CD8-positive, alpha-beta T cell (primary cell): ENCODE measurements at regions of chr12 and their contacts with region 1.

Region 1: DNA sequence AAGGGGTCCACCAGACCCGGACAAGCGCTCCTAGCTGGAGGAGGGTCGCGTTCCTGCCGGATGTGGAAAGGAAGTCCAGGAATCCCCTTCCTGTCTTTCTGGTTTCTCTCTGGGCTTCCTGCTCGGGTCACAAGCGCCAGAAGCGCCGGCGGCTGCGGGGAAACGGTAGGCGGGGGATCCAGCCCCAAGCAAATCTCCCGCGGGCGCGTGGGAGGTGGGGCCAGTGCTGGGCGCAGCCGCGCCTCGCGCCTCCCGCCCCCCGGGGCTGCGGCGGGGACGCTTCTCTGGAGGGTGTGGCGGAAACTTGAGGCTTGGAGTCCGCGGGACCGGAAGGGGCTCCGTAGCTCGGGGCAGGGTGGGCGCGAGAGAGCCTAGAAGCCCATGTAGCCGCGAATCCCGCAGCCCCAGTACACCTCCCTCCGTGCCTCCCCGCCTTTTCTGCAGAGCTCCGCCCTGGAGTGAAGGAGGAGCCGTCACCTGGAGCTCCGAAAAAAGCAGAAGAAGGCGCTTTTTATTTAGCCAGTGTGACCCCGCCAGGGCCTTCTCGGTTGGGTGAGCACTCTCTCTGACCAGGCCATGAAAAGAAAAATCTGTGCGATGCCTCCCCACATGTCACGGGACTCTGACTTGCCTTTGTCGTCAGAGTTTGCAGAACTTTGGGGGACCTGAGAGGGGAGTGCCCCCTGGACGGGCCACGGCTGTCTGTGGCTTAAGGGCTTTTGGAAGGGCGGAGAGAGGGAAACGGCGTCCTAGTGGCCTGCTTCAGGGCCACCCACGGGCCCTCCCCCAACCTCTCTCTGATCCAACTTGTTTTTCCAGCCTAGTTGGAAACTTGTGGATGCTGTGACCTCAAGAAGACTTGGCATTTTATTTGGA is 21.4 kb upstream of the CLEC2D start:
- DNase-seq: peak; percentile 79 to 98 (median 90)
- ATAC-seq: peak; percentile 76
- H3K4me3 ChIP-seq: peak overlapping the region; percentile 81 to 85
- H3K4me3 Mint-ChIP-seq: peak overlapping the region; percentile 98
- H3K27ac ChIP-seq: peak overlapping the region; percentile 83 to 93
- H3K27ac Mint-ChIP-seq: peak overlapping the region; percentile 96
- H3K4me1 ChIP-seq: peaks cover 55% of the 10 kb centered on the region
- H3K4me1 Mint-ChIP-seq: peaks cover 61% of the 10 kb centered on the region
- H3K27me3 ChIP-seq: no peaks in the 10 kb centered on the region
- H3K27me3 Mint-ChIP-seq: no peaks in the 10 kb centered on the region
- CTCF ChIP-seq: no peak

Region 2: DNA sequence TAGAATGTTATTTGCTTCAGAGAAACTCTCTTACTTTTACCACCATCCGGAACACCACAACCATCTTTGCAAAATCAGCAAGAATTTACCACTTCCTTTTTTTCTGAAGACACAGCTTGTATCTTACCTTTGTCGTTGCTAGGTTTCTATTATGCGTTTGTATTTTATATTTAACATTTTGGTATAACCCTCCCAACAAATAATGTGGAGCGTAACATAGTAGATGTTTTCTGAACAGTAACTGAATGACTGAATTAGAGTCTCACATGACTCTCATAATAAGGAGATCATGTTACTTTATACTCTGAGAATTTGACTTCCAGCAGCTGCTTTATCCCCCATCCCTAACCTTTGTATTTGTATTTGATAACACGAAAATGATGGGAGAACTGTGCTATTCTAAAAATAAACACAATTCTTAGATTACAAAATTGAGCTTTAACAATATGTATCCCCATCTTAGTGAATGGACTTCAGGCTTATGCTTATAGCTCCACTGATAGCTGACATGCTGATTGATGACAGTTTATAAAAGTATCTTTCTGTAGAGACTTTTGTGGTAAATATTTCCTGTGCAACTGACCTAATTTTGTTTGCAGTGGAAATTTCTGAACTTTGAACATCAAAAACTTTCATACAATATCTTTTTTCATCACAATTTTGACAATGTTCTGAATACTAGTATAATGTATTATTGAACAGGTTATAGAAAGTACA is 32.5 kb before region 1 on chr12:
- CTCF ChIA-PET with region 1: no interaction called
- POLR2A ChIA-PET with region 1: interaction called, 6 read pairs
- intact Hi-C with region 1: loop called in 1 of 2 experiments (anchors 2 kb)
- DNase-seq: peak in 2 of 9 experiments; percentile 60 to 76
- ATAC-seq: peak; percentile 86
- H3K4me3 ChIP-seq: peak overlapping the region; percentile 19 to 42
- H3K4me3 Mint-ChIP-seq: peak overlapping the region; percentile 74
- H3K27ac ChIP-seq: peak overlapping the region; percentile 75 to 90
- H3K27ac Mint-ChIP-seq: peak overlapping the region; percentile 95
- H3K4me1 ChIP-seq: peaks cover 31% of the 10 kb centered on the region
- H3K4me1 Mint-ChIP-seq: peaks cover 72% of the 10 kb centered on the region
- H3K27me3 ChIP-seq: no peaks in the 10 kb centered on the region
- H3K27me3 Mint-ChIP-seq: no peaks in the 10 kb centered on the region
- CTCF ChIP-seq: no peak

Region 3: DNA sequence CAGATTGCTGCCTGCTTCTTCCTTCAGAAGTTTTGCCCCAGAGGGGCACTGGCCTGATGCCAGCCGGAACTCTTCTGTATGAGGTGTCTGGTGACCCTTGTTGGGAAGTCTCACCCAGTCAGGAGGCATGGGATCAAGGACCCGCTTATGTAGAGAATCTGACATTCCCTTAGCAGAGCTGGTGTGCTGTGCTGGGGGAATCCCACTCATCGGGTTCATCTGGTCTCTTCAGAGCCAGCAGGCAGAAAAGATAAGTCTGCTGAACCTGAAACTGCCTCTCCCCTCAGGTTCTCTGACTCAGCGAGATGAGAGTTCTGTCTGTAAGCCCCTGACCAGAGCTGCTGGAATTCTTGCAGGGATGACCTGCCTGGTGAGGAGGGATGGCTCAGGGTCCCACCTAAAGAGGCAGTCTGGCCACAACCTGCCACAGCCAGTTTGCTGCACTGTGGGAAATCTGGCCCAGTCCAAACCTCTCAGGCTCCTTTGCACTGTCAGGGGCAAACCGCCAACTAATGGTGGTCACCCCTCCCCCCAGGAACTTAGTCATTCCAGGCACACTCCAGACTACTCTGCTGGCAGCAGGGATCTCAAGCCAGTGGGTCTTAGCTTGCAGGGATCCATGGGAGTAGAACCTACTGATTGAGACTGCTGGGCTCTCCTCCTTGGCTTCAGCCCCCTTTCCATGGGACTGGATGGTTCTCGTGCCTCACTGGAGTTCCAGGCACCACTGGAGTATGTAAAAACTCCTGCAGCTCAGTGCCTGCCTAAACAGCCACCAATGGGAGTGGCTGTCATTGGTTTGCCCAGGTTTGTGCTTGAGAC is 25.6 kb after region 1 on chr12:
- CTCF ChIA-PET with region 1: interaction called, 5 read pairs
- POLR2A ChIA-PET with region 1: interaction called, 281 read pairs
- intact Hi-C with region 1: loop called (anchors 1 kb)
- DNase-seq: peak in 7 of 9 experiments; percentile 44 to 82 (median 63)
- ATAC-seq: peak; percentile 37
- H3K4me3 ChIP-seq: peak overlapping the region; percentile 50 to 68
- H3K4me3 Mint-ChIP-seq: peak overlapping the region; percentile 88
- H3K27ac ChIP-seq: peak overlapping the region; percentile 42 to 74
- H3K27ac Mint-ChIP-seq: peak overlapping the region; percentile 95
- H3K4me1 ChIP-seq: peaks cover 44% of the 10 kb centered on the region
- H3K4me1 Mint-ChIP-seq: peaks cover 76% of the 10 kb centered on the region
- H3K27me3 ChIP-seq: no peaks in the 10 kb centered on the region
- H3K27me3 Mint-ChIP-seq: no peaks in the 10 kb centered on the region
- CTCF ChIP-seq: no peak

Region 4: DNA sequence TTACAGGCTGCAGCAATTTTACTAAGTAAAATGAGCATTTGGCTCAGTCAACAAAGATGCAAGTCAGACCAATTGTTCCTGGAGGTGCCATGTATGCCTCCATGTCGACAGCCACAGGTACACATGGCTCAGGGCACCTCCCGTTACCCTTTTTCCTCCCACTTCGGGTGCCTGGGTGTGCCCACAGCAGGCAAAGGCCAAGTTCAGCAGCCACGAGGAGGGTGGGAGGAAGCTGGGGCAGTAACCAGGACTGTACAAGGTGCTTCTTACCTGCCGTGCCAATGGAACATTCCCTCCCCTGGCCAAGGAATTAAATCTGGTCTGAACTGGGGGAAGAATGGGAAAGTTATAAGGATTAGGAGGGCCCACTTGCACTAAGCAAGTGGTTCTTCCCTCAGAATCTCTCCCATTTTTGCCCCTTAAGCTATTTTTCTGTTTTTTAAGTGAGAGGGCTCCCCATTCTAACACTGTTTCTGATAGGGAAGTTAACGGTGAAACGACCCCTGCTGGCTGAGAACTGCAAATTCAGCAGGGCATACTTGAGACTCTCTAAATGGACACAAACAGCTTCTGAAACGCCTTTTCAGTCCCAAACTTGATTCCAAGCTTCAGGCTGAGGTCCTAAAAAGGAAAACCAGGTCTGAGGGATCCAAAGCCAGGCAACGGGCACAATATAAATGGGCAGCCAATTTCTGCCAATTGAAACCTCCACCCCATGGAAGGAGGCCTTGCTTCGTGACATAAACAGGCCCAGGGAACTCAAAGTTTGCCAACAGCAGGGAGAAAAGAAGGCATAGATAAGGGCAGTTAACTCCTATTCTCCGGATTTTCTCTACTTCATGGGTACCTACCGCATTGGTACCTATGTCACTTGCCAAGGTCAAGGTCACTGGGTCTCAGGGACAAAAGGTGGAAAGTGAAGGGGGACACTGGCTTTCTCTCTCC is 60.1 kb after region 1 on chr12:
- CTCF ChIA-PET with region 1: interaction called, 21 read pairs
- POLR2A ChIA-PET with region 1: interaction called, 27 read pairs
- intact Hi-C with region 1: loop called in 1 of 2 experiments (anchors 2 kb)
- DNase-seq: peak; percentile 47 to 88 (median 73)
- ATAC-seq: peak; percentile 89
- H3K4me3 ChIP-seq: peak overlapping the region; percentile 5 to 21
- H3K4me3 Mint-ChIP-seq: peak overlapping the region; percentile 73
- H3K27ac ChIP-seq: peak overlapping the region; percentile 19 to 75
- H3K27ac Mint-ChIP-seq: peak overlapping the region; percentile 95
- H3K4me1 ChIP-seq: peaks cover 37% of the 10 kb centered on the region
- H3K4me1 Mint-ChIP-seq: peaks cover 62% of the 10 kb centered on the region
- H3K27me3 ChIP-seq: no peaks in the 10 kb centered on the region
- H3K27me3 Mint-ChIP-seq: no peaks in the 10 kb centered on the region
- CTCF ChIP-seq: peak; percentile 70

Region 5: GRCh38 chr12:9773216-9773877 is 125.3 kb after region 1 on chr12:
- CTCF ChIA-PET with region 1: no interaction called
- POLR2A ChIA-PET with region 1: no interaction called
- intact Hi-C with region 1: no loop called
- DNase-seq: peak in 1 of 9 experiments; percentile 60
- ATAC-seq: peak; percentile 71
- H3K4me3 ChIP-seq: no peak overlapping the region
- H3K4me3 Mint-ChIP-seq: peak overlapping the region; percentile 60
- H3K27ac ChIP-seq: peak overlapping the region in 1 of 2 experiments; percentile 3
- H3K27ac Mint-ChIP-seq: peak overlapping the region; percentile 70
- H3K4me1 ChIP-seq: peaks cover 39% of the 10 kb centered on the region
- H3K4me1 Mint-ChIP-seq: peaks cover 80% of the 10 kb centered on the region
- H3K27me3 ChIP-seq: no peaks in the 10 kb centered on the region
- H3K27me3 Mint-ChIP-seq: no peaks in the 10 kb centered on the region
- CTCF ChIP-seq: no peak

Region 6: DNA sequence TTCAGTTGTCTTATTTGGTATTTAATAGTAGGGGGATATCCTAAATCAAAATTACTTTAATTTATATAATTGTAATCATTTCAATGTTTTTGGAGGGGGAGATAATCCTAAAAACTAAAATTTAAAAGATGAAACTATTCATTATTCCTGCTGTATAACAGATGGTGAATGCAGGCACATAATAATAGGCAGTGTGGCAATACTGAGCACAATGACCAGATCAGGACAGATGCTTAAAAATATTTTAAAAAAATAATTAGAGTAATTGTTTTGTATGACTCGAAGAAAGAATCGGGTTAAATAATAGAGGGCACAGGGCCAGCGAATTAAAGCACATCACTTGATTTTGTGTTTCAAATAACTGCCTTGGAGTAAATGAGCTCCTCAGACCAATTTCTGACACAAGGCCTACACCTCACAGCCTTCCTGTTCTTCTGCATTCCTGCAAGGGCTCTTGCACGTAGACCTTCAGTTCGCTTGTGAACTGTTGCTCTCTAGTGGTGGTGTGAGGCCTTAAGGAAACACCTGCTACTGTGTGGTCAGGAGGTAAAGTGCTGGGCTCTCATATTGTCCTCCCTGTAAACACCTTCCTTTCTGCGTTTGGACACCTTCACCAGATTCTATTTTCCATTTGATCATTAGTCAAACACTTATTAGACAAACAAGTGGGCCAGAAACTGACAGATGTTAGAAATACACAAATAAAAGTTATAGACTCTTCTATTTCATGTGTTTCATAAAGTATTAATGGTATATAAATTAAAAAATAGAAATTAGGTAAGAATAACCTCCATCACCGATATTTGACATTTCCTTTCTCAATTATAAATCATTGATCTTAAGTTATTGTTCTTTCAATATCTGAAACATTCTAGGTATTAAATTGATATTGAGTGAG is 149.9 kb after region 1 on chr12:
- CTCF ChIA-PET with region 1: interaction called, 3 read pairs
- POLR2A ChIA-PET with region 1: no interaction called
- intact Hi-C with region 1: loop called in 1 of 2 experiments (anchors 5 kb)
- DNase-seq: peak; percentile 37 to 91 (median 67)
- ATAC-seq: peak; percentile 95
- H3K4me3 ChIP-seq: no peak overlapping the region
- H3K4me3 Mint-ChIP-seq: no peak overlapping the region
- H3K27ac ChIP-seq: no peak overlapping the region
- H3K27ac Mint-ChIP-seq: peak overlapping the region; percentile 46
- H3K4me1 ChIP-seq: peaks cover 49% of the 10 kb centered on the region
- H3K4me1 Mint-ChIP-seq: peaks cover 45% of the 10 kb centered on the region
- H3K27me3 ChIP-seq: no peaks in the 10 kb centered on the region
- H3K27me3 Mint-ChIP-seq: no peaks in the 10 kb centered on the region
- CTCF ChIP-seq: peak; percentile 86

Region 7: GRCh38 chr12:10562306-10562933 is 914.4 kb after region 1 on chr12:
- CTCF ChIA-PET with region 1: no interaction called
- POLR2A ChIA-PET with region 1: no interaction called
- intact Hi-C with region 1: loop called in 1 of 2 experiments (anchors 2 kb)
- DNase-seq: peak in 4 of 9 experiments; percentile 29 to 79 (median 62)
- ATAC-seq: no peak
- H3K4me3 ChIP-seq: no peak overlapping the region
- H3K4me3 Mint-ChIP-seq: peak overlapping the region; percentile 11
- H3K27ac ChIP-seq: no peak overlapping the region
- H3K27ac Mint-ChIP-seq: peak overlapping the region; percentile 80
- H3K4me1 ChIP-seq: peaks cover 70% of the 10 kb centered on the region
- H3K4me1 Mint-ChIP-seq: peaks cover 83% of the 10 kb centered on the region
- H3K27me3 ChIP-seq: no peaks in the 10 kb centered on the region
- H3K27me3 Mint-ChIP-seq: no peaks in the 10 kb centered on the region
- CTCF ChIP-seq: peak; percentile 98